ENCODE measurements at regions of chr15 and their contacts with region 1.

Region 1: GRCh38 chr15:74906446-74907162 is at the start of gene FAM219B:
- DNase-seq: peak; percentile 98
- total RNA-seq, gene FAM219B: 62.5 TPM

Region 2: DNA sequence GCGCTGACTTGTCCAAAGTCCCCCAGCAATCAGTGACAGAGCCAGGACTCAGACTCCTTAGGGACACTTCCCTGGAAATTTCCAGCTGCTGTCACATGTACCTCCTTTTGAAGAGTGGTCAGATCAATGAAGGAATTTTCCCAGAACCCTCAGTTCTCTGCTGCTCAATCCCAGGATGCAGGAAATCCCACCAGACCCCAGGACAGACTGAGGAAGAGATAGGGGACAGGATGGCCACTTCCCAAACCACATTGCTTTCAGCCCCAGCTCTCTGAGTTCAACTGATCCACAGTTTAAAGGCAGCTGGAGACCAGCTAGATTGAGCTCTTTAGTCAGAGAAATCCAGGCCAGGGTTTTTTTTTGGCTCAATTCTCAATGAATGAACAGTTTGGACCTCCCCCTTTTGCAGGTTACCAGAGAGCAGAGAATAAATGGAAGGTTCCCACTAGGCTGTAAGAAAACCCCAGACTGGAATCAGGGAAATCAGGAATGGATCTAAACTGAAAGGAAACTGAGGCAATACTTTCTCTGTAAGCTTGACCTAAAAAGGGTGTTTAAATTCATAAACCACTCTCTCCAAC is 182.8 kb before region 1 on chr15:
- intact Hi-C with region 1: no loop called
- DNase-seq: no peak

Region 3: GRCh38 chr15:74787251-74788041 is 119.2 kb before region 1 on chr15:
- intact Hi-C with region 1: loop called (anchors 5 kb)
- DNase-seq: peak; percentile 93

Region 4: GRCh38 chr15:74842581-74843444 is 63.8 kb before region 1 on chr15 and contains the start of gene ULK3:
- intact Hi-C with region 1: loop called (anchors 2 kb)
- DNase-seq: peak; percentile 96
- total RNA-seq, gene ULK3: 25.6 TPM

Region 5: DNA sequence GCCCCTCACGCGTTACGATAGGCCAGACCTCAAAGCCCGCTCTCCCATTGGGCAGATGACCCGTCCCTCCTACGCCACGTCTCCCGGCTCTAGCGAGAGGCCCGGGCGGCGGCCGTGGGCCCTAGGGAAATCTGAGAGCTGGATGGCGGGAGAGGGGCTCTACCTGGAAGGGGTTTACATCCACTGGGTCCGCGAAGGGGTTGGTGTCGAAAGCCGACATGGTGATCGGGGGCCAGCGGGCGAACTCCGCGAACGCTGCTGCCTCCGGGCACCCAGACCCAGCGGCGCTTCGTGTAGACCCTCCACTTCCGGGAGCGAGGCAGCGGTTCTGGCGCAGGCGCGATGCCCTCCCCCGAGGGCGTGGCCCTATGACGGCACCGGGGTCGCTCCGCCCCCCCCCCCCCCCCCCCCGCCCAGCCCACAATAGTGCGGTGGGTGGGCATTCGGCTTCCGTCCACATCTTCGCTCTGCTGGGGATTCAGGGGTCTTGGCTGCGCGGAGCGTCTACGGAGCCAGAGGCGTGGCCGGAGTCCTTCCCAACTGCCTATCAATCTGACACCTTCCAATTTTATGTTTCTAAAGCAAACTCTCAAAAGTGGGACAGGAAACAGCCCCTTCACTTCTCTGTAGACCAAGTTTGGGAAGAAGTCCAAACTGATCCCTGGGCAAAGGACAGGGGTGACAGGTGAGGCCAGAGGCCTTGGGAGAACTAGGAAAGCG is 33.4 kb before region 1 on chr15 and contains the start of gene SCAMP2:
- intact Hi-C with region 1: loop called (anchors 2 kb)
- DNase-seq: peak; percentile 98
- total RNA-seq, gene SCAMP2: 33.3 TPM

Region 6: GRCh38 chr15:74937596-74938296 is 31.1 kb after region 1 on chr15 and contains the start of gene COX5A:
- intact Hi-C with region 1: loop called (anchors 1 kb)
- DNase-seq: peak; percentile 97
- total RNA-seq, gene COX5A: 804 TPM

Region 7: GRCh38 chr15:75016431-75016830 is 109.8 kb after region 1 on chr15:
- intact Hi-C with region 1: no loop called
- DNase-seq: no peak